SK-N-SH (cell line): ENCODE measurements at regions of chr7 and their contacts with region 1.

Region 1: DNA sequence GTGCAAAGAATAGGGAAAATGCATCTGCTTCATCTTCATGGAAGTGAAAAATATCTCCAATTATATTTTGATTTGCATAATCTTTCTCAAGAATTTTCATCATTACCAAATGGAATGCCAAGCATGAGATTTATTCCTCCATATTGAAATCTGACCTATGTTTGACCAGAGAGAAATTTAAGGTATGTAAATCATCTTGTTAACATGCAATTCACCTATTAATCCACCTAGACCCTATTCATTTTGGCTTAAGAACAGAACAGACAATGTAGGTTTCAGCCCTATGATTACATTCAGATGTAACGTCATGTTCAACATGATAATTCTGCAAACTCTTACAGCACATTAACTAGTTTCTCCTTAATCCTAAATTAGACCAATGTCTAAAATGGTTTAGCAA is 30.8 kb upstream of the TMEM140 start:
- DNase-seq: no peak
- H3K4me3 ChIP-seq: no peak overlapping the region
- H3K27ac ChIP-seq: no peak overlapping the region
- H3K4me1 ChIP-seq: no peaks in the 10 kb centered on the region
- H3K27me3 ChIP-seq: no peaks in the 10 kb centered on the region
- CTCF ChIP-seq: no peak
- EP300 ChIP-seq: no peak
- RAD21 ChIP-seq: no peak

Region 2: DNA sequence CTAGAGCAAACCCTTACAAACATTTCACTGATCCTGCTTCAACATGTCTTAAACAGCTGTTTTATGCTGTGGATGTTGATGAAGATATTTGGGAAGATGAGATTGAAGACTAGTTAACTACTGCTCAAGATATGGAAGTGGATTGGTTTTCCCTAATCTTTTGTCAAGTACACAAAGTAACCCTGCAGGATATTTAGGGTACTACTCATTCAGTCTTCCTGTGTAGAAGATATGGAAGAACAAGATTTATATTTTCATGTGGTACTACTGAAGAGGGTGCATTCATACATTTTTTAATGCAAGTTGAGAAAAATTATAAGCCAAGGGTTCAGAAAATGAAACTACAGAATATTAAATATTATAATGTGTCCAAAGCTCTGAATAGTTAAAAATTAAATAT is 12.5 kb after region 1 on chr7:
- CTCF ChIA-PET with region 1: interaction called, 10 read pairs
- POLR2A ChIA-PET with region 1: no interaction called
- DNase-seq: no peak
- H3K4me3 ChIP-seq: no peak overlapping the region
- H3K27ac ChIP-seq: no peak overlapping the region
- H3K4me1 ChIP-seq: no peaks in the 10 kb centered on the region
- H3K27me3 ChIP-seq: peaks cover 6% of the 10 kb centered on the region; the same call in 1 of the 2 replicates
- CTCF ChIP-seq: no peak
- EP300 ChIP-seq: no peak
- RAD21 ChIP-seq: no peak